ENCODE measurements at regions of chr11 and their contacts with region 1.

Region 1: GRCh38 chr11:114257621-114258558 is 38.3 kb upstream of the NNMT start:
- DNase-seq: peak; percentile 68 to 91 (median 82)
- ATAC-seq: peak; percentile 38 to 61
- H3K4me3 ChIP-seq: no peak overlapping the region
- H3K27ac ChIP-seq: peak overlapping the region; percentile 74
- H3K4me1 ChIP-seq: peaks cover 15% of the 10 kb centered on the region
- H3K27me3 ChIP-seq: no peaks in the 10 kb centered on the region

Region 2: DNA sequence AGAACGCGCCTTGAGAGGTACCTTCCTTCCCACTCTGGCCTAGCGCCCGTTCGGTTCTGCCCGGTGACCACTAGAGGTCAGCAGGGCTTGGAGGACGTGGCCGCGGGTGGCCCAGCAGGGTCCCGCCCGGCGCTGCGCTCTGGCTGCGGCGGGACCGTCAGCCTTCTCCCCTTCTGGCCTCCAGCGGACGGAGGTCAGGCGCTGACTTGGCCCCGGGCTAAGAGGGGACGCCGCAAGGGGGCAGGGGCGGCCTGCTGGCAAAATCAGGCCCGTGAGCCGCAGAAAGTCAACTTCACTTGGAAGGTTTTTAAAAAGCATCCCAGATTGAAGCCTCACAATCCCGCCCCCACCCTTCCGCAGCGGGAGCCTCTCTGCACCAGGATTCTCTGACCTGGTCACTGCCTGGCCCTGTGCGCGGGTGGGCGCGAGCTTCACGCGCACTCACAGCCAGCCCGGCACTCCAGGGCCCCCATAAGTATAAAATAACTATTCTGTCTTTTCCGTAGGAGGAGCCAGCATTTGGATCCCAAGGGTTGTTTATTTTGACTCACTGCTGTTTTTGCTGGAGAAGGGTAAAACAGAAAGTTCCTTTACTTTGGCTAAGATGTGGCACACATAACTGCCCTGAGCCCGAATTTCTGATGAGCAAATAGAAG is 221.6 kb before region 1 on chr11:
- intact Hi-C with region 1: loop called in 3 of 4 experiments (anchors 2 to 5 kb)
- DNase-seq: peak; percentile 88 to 94 (median 94)
- ATAC-seq: peak; percentile 94 to 96
- H3K4me3 ChIP-seq: peak overlapping the region; percentile 15
- H3K27ac ChIP-seq: peak overlapping the region; percentile 38
- H3K4me1 ChIP-seq: peaks cover 2% of the 10 kb centered on the region
- H3K27me3 ChIP-seq: no peaks in the 10 kb centered on the region

Region 3: DNA sequence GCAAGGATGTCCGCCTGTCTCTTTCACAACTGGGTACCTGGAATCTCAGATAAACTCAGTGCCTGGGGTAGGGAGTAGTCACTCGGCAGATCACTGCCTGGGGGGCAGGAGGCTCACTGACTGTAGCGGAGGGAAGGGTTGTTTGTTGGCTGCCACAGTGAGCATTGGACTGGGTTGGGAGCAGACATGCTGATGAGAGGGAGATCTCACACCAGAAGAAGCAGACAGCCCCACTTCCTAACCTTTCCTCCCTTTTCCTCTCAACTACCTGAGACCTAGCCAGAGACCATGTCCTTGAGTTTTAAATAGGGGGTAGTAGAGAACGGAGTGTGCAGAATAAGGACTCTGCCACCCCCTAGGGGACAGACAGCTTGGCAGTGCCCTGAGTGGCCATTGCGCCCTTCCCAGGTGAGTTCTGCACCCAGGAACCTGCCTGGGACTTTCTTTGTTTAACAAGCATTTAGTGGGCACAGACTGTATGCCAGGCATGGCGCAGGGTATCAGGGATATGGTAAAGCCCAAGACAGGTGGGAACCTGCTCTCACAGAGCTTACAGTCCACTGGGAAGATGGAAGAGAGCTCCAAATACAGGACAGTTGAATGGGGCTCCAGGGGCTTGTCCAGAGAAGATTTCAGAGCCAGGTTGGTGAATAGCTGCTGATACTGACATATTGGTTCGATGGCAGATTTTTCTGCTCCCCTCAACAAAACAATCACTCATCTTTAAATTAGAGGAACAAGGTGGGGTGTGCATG is 77.4 kb before region 1 on chr11:
- intact Hi-C with region 1: loop called in 1 of 4 experiments (anchors 5 kb)
- DNase-seq: peak in 2 of 3 donors; percentile 49 to 78
- ATAC-seq: peak; percentile 51 to 59
- H3K4me3 ChIP-seq: peak overlapping the region; percentile 48
- H3K27ac ChIP-seq: peak overlapping the region; percentile 100
- H3K4me1 ChIP-seq: peaks cover 67% of the 10 kb centered on the region
- H3K27me3 ChIP-seq: no peaks in the 10 kb centered on the region

Region 4: GRCh38 chr11:114208377-114208776 is 49.5 kb before region 1 on chr11:
- intact Hi-C with region 1: loop called in 3 of 4 experiments (anchors 10 kb)
- DNase-seq: no peak
- ATAC-seq: no peak
- H3K4me3 ChIP-seq: no peak overlapping the region
- H3K27ac ChIP-seq: no peak overlapping the region
- H3K4me1 ChIP-seq: peaks cover 7% of the 10 kb centered on the region
- H3K27me3 ChIP-seq: no peaks in the 10 kb centered on the region

Region 5: DNA sequence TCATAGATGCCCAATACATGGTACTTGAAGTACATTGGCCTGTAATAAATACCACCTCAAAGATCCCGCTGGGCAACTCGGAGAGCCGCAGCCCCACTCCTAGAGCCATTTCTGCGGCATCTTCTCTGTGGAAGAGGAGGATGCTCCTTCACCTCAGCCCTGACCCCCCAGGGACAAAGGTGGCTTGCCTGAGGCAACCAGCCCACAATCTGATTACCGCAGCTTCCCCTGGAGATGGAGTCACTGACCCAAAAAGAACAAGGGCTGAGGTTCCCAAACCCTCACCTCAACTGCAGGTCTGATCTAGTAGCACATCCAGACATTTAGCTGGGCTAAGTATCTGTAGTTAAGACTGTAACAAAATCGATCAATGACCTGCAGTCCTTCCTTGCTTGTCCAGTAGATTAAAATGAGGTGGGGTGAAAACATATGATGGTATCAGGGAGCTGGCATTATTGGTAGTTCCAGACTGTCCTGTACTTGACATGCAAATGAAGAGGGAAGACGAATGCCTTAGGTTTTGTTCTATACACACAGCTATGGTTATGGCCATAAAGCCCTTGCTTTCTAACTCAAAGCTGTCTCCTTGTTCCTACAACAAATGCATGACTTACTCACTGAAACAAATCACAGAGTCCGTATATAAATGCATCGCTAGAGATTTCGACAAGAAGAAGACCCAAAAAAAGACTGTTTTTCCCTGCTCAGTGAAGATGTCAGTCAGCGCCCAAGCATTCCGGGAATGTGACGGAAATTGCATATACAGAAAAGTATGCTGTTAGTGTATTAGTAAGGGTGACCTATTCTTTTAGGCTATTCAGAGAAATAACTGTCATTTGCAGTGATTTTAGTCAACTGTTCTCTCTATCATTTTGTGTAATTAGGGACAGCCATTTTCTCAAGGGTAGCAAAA is 108.7 kb after region 1 on chr11:
- intact Hi-C with region 1: no loop called
- DNase-seq: no peak
- ATAC-seq: no peak
- H3K4me3 ChIP-seq: no peak overlapping the region
- H3K27ac ChIP-seq: no peak overlapping the region
- H3K4me1 ChIP-seq: no peaks in the 10 kb centered on the region
- H3K27me3 ChIP-seq: no peaks in the 10 kb centered on the region

Region 6: DNA sequence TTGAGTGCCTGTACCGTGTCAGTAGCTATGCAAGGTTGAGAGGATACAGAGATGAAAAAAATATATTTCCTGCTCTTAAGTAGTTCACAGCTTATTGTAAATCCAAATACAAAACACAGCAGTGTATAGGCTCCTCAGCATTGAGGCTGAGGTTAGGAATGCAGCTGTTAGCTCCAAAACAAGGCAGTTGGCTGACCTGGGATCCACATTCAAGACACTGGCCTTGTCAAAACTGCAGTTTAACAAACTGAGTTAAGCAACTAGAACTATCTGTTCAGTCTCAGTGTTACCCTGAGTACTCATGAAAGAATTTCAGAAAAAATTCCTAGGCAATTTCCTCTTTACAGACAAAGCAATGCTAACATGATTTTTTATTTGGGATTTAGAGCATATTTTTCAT is 224.2 kb after region 1 on chr11:
- intact Hi-C with region 1: no loop called
- DNase-seq: no peak
- ATAC-seq: no peak
- H3K4me3 ChIP-seq: no peak overlapping the region
- H3K27ac ChIP-seq: no peak overlapping the region
- H3K4me1 ChIP-seq: no peaks in the 10 kb centered on the region
- H3K27me3 ChIP-seq: no peaks in the 10 kb centered on the region